ENCODE measurements at regions of chr20 and their contacts with region 1.

Region 1: DNA sequence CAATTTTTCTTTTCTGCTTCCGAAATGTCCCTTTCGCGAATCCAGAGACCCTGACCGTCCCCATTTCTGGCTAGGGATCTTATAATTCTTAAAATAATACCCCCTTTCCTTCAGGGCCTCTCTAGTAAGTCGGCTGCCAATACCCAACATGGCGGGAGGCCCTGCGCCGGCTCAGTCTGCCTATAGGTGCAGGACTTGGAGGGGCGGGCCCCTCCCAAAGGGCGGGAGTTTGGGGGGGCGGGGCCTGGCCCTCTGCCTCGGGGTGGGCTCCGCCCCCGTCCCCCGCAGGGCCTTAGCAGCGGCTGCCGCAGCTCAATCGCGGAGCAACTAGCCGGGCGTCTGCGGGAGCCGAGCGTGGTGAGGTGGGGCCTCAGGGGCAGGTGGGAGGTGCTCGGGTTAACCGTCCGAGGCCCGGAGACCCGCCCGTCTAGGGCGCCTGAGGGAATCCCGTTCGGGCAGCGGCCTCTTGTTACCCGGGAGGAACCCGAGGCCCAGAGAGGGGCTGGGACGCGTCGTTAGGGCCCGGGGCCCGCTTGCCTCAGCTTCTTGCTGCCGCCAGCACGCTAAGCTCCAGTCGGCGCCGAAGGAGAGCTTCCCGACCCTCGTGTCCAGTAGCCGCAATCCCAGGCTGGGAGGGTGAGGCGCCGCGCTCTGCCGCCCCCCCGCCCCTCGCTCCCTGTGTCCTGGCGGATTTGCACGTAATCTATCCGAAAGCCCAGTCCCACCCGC is at the start of gene CEP250:
- DNase-seq: peak; percentile 98
- ATAC-seq: peak; percentile 97
- H3K4me3 Mint-ChIP-seq: peak within 1 kb of the TSS; percentile 79
- H3K27ac Mint-ChIP-seq: peak within 1 kb of the TSS; percentile 97
- H3K4me1 Mint-ChIP-seq: peaks cover 27% of the 10 kb centered on the region
- H3K27me3 Mint-ChIP-seq: no peaks in the 10 kb centered on the region
- total RNA-seq, gene CEP250: 50.4 to 60.2 TPM

Region 2: GRCh38 chr20:34825530-34826362 is 629.3 kb before region 1 on chr20 and contains the start of gene NCOA6:
- CTCF ChIA-PET with region 1: no interaction called
- POLR2A ChIA-PET with region 1: no interaction called
- intact Hi-C with region 1: loop called in 1 of 2 experiments (anchors 10 kb)
- DNase-seq: peak; percentile 95
- ATAC-seq: peak; percentile 67
- H3K4me3 Mint-ChIP-seq: peak within 1 kb of the TSS; percentile 86
- H3K27ac Mint-ChIP-seq: peak within 1 kb of the TSS; percentile 95
- H3K4me1 Mint-ChIP-seq: peaks cover 30% of the 10 kb centered on the region
- H3K27me3 Mint-ChIP-seq: no peaks in the 10 kb centered on the region
- total RNA-seq, gene NCOA6: 20.3 to 31.1 TPM

Region 3: GRCh38 chr20:35277531-35278395 is 177.3 kb before region 1 on chr20 and contains the start of gene MMP24OS:
- CTCF ChIA-PET with region 1: no interaction called
- POLR2A ChIA-PET with region 1: interaction called, 11 read pairs
- intact Hi-C with region 1: loop called in 1 of 2 experiments (anchors 1 kb)
- DNase-seq: peak; percentile 94
- ATAC-seq: peak; percentile 96
- H3K4me3 Mint-ChIP-seq: peak within 1 kb of the TSS; percentile 99
- H3K27ac Mint-ChIP-seq: peak within 1 kb of the TSS; percentile 97
- H3K4me1 Mint-ChIP-seq: peaks cover 9% of the 10 kb centered on the region
- H3K27me3 Mint-ChIP-seq: no peaks in the 10 kb centered on the region
- total RNA-seq, gene MMP24OS: 44.6 to 56.8 TPM

Region 4: DNA sequence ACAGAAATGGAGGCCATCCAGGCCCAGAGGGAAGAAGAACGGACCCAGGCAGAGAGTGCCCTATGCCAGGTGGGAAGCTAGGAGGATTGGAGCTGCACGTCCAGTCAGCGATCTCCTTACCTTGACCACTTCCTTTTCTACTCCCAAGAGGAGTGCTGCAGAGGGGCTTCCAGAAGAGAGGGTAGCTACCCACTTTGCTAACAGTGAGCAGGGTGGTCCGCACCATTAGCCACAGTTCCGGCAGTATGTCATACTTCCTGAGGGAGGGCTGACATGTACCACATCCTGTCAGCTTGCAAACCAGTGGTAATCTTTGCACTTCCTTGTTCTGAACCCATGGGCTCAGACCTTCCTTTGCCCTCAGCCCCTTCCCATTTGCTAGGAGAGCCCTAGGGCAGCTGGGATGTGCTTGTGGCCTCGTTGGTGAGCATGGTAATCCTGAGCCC is 35.7 kb after region 1 on chr20:
- CTCF ChIA-PET with region 1: interaction called, 5 read pairs
- POLR2A ChIA-PET with region 1: interaction called, 3 read pairs
- intact Hi-C with region 1: loop called in 1 of 2 experiments (anchors 2 kb)
- DNase-seq: peak; percentile 72
- ATAC-seq: peak; percentile 96
- H3K4me3 Mint-ChIP-seq: peak overlapping the region; percentile 83
- H3K27ac Mint-ChIP-seq: peak overlapping the region; percentile 98
- H3K4me1 Mint-ChIP-seq: peaks cover 44% of the 10 kb centered on the region
- H3K27me3 Mint-ChIP-seq: no peaks in the 10 kb centered on the region

Region 5: GRCh38 chr20:35664544-35665221 is 209.6 kb after region 1 on chr20 and contains the starts of genes CPNE1 and RBM12:
- CTCF ChIA-PET with region 1: no interaction called
- POLR2A ChIA-PET with region 1: interaction called, 3 read pairs
- intact Hi-C with region 1: loop called in 1 of 2 experiments (anchors 1 kb)
- DNase-seq: peak; percentile 96
- ATAC-seq: peak; percentile 68
- H3K4me3 Mint-ChIP-seq: peak within 1 kb of the TSS; percentile 80
- H3K27ac Mint-ChIP-seq: peak within 1 kb of the TSS; percentile 100
- H3K4me1 Mint-ChIP-seq: peaks cover 36% of the 10 kb centered on the region
- H3K27me3 Mint-ChIP-seq: no peaks in the 10 kb centered on the region
- total RNA-seq, gene CPNE1: 249 to 258 TPM
- total RNA-seq, gene RBM12: 122 to 148 TPM

Region 6: GRCh38 chr20:35771689-35772562 is 316.9 kb after region 1 on chr20 and contains the start of gene PHF20:
- CTCF ChIA-PET with region 1: no interaction called
- POLR2A ChIA-PET with region 1: no interaction called
- intact Hi-C with region 1: loop called in 1 of 2 experiments (anchors 1 kb)
- DNase-seq: peak; percentile 100
- ATAC-seq: peak; percentile 91
- H3K4me3 Mint-ChIP-seq: peak within 1 kb of the TSS; percentile 81
- H3K27ac Mint-ChIP-seq: peak within 1 kb of the TSS; percentile 94
- H3K4me1 Mint-ChIP-seq: peaks cover 76% of the 10 kb centered on the region
- H3K27me3 Mint-ChIP-seq: no peaks in the 10 kb centered on the region
- total RNA-seq, gene PHF20: 54.3 to 61.6 TPM

Measured in activated CD4-positive, alpha-beta T cell treated with anti-CD3 and anti-CD28 coated beads for 36 hours (primary cell).